ENCODE measurements at regions of chr17 and their contacts with region 1.

Region 1: GRCh38 chr17:46170639-46171432 is 22.4 kb downstream of the KANSL1 start:
- DNase-seq: no peak
- H3K4me3 ChIP-seq: no peak overlapping the region
- CTCF ChIP-seq: no peak
- POLR2A ChIP-seq: no peak

Region 2: GRCh38 chr17:45965812-45966211 is 205.0 kb before region 1 on chr17:
- intact Hi-C with region 1: no loop called
- DNase-seq: no peak
- H3K4me3 ChIP-seq: no peak overlapping the region
- CTCF ChIP-seq: no peak
- POLR2A ChIP-seq: no peak

Region 3: GRCh38 chr17:46143827-46144236 is 27.0 kb before region 1 on chr17:
- intact Hi-C with region 1: loop called (anchors 1 kb)
- DNase-seq: no peak
- H3K4me3 ChIP-seq: no peak overlapping the region
- CTCF ChIP-seq: no peak
- POLR2A ChIP-seq: no peak

Measured in lower leg skin (tissue), 4 donors.